SK-N-SH (cell line): ENCODE measurements at regions of chr21 and their contacts with region 1.

Region 1: GRCh38 chr21:33924079-33924765 is 8.6 kb upstream of the ATP5PO start:
- DNase-seq: peak; percentile 79
- H3K4me3 ChIP-seq: no peak overlapping the region; a peak in 1 of 4 replicates
- H3K27ac ChIP-seq: no peak overlapping the region; a peak in 1 of 4 replicates
- H3K4me1 ChIP-seq: peaks cover 5 to 10% of the 10 kb centered on the region in 2 experiments; a peak in 1 of 4 replicates
- H3K27me3 ChIP-seq: no peaks in the 10 kb centered on the region
- CTCF ChIP-seq: peak; percentile 92
- EP300 ChIP-seq: no peak
- RAD21 ChIP-seq: peak; percentile 99

Region 2: GRCh38 chr21:33428669-33429068 is 495.6 kb before region 1 on chr21:
- CTCF ChIA-PET with region 1: no interaction called
- POLR2A ChIA-PET with region 1: no interaction called
- DNase-seq: no peak
- H3K4me3 ChIP-seq: no peak overlapping the region
- H3K27ac ChIP-seq: no peak overlapping the region
- H3K4me1 ChIP-seq: no peaks in the 10 kb centered on the region; a peak in 2 of 4 replicates
- H3K27me3 ChIP-seq: no peaks in the 10 kb centered on the region
- CTCF ChIP-seq: no peak
- EP300 ChIP-seq: no peak
- RAD21 ChIP-seq: no peak

Region 3: DNA sequence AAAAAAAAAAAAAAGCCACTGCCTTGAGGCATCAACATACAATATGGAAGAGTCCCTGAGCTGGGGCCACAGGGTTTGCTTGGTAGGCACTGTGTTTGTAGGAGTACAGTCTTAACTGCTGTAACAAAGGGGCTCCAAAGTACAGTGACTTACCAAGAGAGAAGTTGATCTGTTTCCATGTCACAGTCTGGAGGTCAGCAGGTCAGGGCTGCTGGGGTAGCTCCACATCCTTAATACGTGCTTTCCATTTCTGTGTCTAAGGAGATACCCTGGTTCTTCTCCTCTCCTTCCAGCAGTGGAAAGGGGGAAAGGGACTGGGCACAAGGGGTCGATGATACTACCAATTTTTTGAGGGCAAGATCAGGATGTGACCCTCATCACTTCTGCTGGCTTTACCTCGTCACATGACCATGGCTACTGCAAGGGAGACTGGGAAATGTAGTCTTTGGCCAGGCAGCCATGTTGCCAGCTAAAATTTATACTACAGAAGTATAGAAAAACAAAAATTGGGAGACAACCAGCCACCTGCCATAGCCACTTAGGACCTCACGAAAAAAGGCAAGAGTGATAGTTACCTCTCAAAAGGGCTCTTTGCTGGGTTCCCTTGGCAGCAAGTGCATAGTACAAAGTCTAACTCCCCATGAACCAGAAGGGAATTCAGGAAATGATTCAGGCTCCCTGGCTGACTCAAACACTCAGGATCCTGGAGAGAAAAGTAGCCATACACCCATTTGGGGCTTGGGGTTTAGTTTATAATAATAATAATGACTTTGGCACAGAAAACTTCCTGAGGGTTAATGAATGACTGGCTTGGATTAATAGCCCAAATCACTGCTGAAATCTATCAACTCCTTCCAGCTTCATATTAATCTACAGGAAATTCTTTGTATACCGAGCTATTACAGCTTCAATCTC is 44.1 kb after region 1 on chr21:
- CTCF ChIA-PET with region 1: interaction called, 17 read pairs
- POLR2A ChIA-PET with region 1: no interaction called
- DNase-seq: no peak
- H3K4me3 ChIP-seq: peak overlapping the region in 1 of 2 experiments; percentile 39; a peak in 1 of 4 replicates
- H3K27ac ChIP-seq: peak overlapping the region; percentile 67 to 89; a peak in 3 of 4 replicates
- H3K4me1 ChIP-seq: peaks cover 0 to 43% of the 10 kb centered on the region in 2 experiments; a peak in 3 of 4 replicates
- H3K27me3 ChIP-seq: no peaks in the 10 kb centered on the region
- CTCF ChIP-seq: no peak
- EP300 ChIP-seq: peak in 1 of 2 experiments; percentile 75; a peak in 2 of 4 replicates
- RAD21 ChIP-seq: no peak

Region 4: GRCh38 chr21:34129039-34129891 is 205.0 kb after region 1 on chr21:
- CTCF ChIA-PET with region 1: interaction called, 12 read pairs
- POLR2A ChIA-PET with region 1: no interaction called
- DNase-seq: peak; percentile 49
- H3K4me3 ChIP-seq: peak overlapping the region; percentile 24 to 54
- H3K27ac ChIP-seq: peak overlapping the region; percentile 87 to 95
- H3K4me1 ChIP-seq: peaks cover 27 to 45% of the 10 kb centered on the region in 2 experiments
- H3K27me3 ChIP-seq: no peaks in the 10 kb centered on the region
- CTCF ChIP-seq: peak; percentile 60
- EP300 ChIP-seq: no peak
- RAD21 ChIP-seq: peak; percentile 59

Region 5: DNA sequence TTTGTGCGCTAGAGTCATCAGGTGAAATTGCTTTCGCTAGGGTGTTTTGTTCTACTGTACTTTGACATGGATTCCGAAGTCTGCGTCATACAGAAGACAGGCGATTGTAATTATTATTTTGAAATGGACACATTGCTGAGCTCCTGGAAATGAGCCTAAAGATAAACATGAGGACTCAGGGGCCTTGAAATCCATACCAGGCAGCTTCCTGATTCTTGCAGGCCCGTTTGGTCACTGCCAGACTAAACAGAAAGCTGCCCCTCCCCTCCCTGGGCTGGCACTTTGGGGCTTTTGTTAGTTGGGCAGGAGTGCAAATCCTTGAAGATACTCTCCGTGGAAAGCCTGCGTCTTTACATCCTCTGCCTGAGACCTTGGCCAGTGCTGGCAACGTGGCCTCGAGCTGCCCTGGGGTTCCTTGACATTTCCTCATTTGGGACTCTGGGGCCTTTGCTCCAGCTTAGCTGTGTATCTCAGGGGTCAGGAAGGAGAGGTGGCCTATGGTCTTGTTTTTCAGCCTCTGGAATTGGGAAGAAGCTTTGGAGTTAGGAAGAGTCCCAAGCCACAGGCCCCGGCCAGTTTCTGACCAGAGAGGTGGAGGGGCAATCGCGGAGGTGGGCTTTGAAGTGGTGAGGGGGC is 412.7 kb after region 1 on chr21:
- CTCF ChIA-PET with region 1: interaction called, 407 read pairs
- POLR2A ChIA-PET with region 1: no interaction called
- DNase-seq: no peak
- H3K4me3 ChIP-seq: no peak overlapping the region
- H3K27ac ChIP-seq: no peak overlapping the region
- H3K4me1 ChIP-seq: no peaks in the 10 kb centered on the region; a peak in 1 of 4 replicates
- H3K27me3 ChIP-seq: no peaks in the 10 kb centered on the region; the same call in 1 of the 2 replicates
- CTCF ChIP-seq: no peak
- EP300 ChIP-seq: no peak
- RAD21 ChIP-seq: no peak

Region 6: GRCh38 chr21:34603002-34603709 is 678.9 kb after region 1 on chr21:
- CTCF ChIA-PET with region 1: interaction called, 11 read pairs
- POLR2A ChIA-PET with region 1: no interaction called
- DNase-seq: peak; percentile 73
- H3K4me3 ChIP-seq: peak overlapping the region in 1 of 2 experiments; percentile 9; a peak in 1 of 4 replicates
- H3K27ac ChIP-seq: no peak overlapping the region
- H3K4me1 ChIP-seq: peaks cover 3 to 5% of the 10 kb centered on the region in 2 experiments; a peak in 2 of 4 replicates
- H3K27me3 ChIP-seq: no peaks in the 10 kb centered on the region
- CTCF ChIP-seq: peak; percentile 76
- EP300 ChIP-seq: no peak
- RAD21 ChIP-seq: peak; percentile 84